Ovary (tissue), 10 donors: ENCODE measurements at regions of chr14 and their contacts with region 1.

Region 1: GRCh38 chr14:106452426-106452825 is 926.0 kb downstream of the TMEM121 start:
- DNase-seq: no peak
- H3K4me3 ChIP-seq: no peak overlapping the region
- H3K27ac ChIP-seq: no peak overlapping the region
- H3K4me1 ChIP-seq: no peaks in the 10 kb centered on the region
- H3K27me3 ChIP-seq: no peaks in the 10 kb centered on the region
- CTCF ChIP-seq: no peak
- EP300 ChIP-seq: no peak
- POLR2A ChIP-seq: no peak

Region 2: DNA sequence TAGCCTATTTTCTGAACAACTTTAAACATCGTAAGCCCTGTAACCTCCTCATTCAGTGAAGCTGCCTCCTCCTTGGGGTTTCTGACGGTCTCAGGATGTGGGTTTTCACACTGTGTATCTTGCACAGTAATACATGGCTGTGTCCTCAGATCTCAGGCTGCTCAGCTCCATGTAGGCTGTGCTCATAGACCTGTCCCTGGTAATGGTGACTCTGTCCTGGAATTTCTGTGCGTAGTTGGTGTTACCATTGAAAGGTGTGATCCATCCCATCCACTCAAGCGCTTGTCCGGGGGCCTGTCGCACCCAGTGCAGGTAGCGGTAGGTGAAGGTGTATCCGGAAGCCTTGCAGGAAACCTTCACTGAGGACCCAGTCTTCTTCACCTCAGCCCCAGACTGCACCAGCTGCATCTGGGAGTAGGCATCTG is 54.5 kb after region 1 on chr14:
- intact Hi-C with region 1: loop called in 1 of 4 experiments (anchors 5 kb)
- DNase-seq: no peak
- H3K4me3 ChIP-seq: no peak overlapping the region
- H3K27ac ChIP-seq: no peak overlapping the region
- H3K4me1 ChIP-seq: no peaks in the 10 kb centered on the region
- H3K27me3 ChIP-seq: no peaks in the 10 kb centered on the region
- CTCF ChIP-seq: no peak
- EP300 ChIP-seq: no peak
- POLR2A ChIP-seq: no peak

Region 3: GRCh38 chr14:106530423-106531107 is 78.1 kb after region 1 on chr14:
- intact Hi-C with region 1: no loop called
- DNase-seq: no peak
- H3K4me3 ChIP-seq: no peak overlapping the region
- H3K27ac ChIP-seq: no peak overlapping the region
- H3K4me1 ChIP-seq: no peaks in the 10 kb centered on the region
- H3K27me3 ChIP-seq: no peaks in the 10 kb centered on the region
- CTCF ChIP-seq: no peak
- EP300 ChIP-seq: no peak
- POLR2A ChIP-seq: no peak